Dorsolateral prefrontal cortex (tissue), 120 donors: ENCODE measurements at regions of chr20 and their contacts with region 1.

Region 1: GRCh38 chr20:18507218-18508021 is at the start of gene SEC23B:
- DNase-seq: peak; percentile 94 to 98 (median 98)
- H3K4me3 ChIP-seq: peak within 1 kb of the TSS; percentile 59 to 99 (median 88)
- H3K27ac ChIP-seq: peak within 1 kb of the TSS; percentile 91 to 100 (median 97)
- H3K27me3 ChIP-seq: peaks cover 0 to 23% (median 0%) of the 10 kb centered on the region in 45 donors
- CTCF ChIP-seq: peak in 12 of 56 donors; percentile 3 to 40 (median 17)
- total RNA-seq, gene SEC23B: 31.0 to 72.0 (median 46.7) TPM

Region 2: DNA sequence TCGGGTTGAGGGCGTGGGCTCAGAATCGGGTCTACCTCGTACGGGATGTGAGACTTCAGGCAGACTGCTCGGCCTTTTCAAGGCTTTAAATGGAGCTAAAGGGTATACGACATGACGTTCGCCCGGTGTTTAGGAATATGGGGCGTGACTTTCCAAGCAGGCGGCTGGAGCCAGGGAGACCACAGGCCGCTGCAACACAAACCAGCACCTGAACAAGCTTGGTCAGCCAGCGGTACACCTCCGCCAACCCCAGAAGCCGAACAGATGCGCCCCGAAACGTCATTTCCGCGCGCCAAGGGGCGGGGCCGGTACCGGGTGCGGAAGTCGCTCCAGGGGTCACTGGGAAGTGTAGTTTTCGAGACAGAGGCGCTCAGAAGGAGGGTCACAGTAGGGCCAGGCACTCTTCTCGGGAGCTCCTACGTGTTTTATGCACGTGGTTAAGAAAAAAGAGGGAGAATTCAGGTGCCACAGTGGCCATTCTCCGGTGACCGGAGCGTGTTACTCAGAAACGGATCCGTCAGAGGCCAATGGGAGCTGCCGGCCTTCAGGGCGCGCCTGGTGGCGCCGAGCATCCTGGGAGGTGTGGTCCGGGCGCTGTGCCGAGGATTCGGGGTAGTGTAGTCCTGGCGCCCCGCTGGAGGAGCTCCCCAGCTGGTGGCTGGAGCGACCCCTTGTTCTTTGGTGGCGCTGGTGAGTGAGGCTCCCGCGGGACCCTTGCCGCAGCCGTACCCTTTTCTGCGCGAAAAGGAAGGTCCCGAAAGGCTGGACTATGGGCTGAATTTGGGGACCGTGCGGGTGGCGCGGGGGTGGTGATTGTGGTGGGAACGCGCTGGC is 219.3 kb before region 1 on chr20 and contains the start of gene ZNF133:
- intact Hi-C with region 1: loop called in 1 of 2 experiments (anchors 10 kb)
- DNase-seq: peak; percentile 94 to 98 (median 96)
- H3K4me3 ChIP-seq: peak within 1 kb of the TSS; percentile 65 to 99 (median 90)
- H3K27ac ChIP-seq: peak within 1 kb of the TSS; percentile 88 to 100 (median 98)
- H3K27me3 ChIP-seq: peaks cover 0 to 5% (median 0%) of the 10 kb centered on the region in 45 donors
- CTCF ChIP-seq: peak in 44 of 56 donors; percentile 2 to 62 (median 38)
- total RNA-seq, gene ZNF133: 14.6 to 30.7 (median 23.0) TPM

Region 3: GRCh38 chr20:18363708-18364390 is 143.6 kb before region 1 on chr20:
- intact Hi-C with region 1: no loop called
- DNase-seq: no peak
- H3K4me3 ChIP-seq: no peak overlapping the region
- H3K27ac ChIP-seq: no peak overlapping the region
- H3K27me3 ChIP-seq: no peaks in the 10 kb centered on the region
- CTCF ChIP-seq: no peak

Region 4: GRCh38 chr20:18466894-18467730 is 40.3 kb before region 1 on chr20 and contains the starts of genes DZANK1 and POLR3F:
- intact Hi-C with region 1: loop called in 1 of 2 experiments (anchors 2 kb)
- DNase-seq: peak; percentile 96 to 99 (median 98)
- H3K4me3 ChIP-seq: peak within 1 kb of the TSS; percentile 72 to 100 (median 95)
- H3K27ac ChIP-seq: peak within 1 kb of the TSS; percentile 76 to 98 (median 93)
- H3K27me3 ChIP-seq: no peaks in the 10 kb centered on the region
- CTCF ChIP-seq: peak in 21 of 56 donors; percentile 3 to 49 (median 16)
- total RNA-seq, gene DZANK1: 5.0 to 14.4 (median 9.3) TPM
- total RNA-seq, gene POLR3F: 6.7 to 24.6 (median 16.5) TPM

Region 5: DNA sequence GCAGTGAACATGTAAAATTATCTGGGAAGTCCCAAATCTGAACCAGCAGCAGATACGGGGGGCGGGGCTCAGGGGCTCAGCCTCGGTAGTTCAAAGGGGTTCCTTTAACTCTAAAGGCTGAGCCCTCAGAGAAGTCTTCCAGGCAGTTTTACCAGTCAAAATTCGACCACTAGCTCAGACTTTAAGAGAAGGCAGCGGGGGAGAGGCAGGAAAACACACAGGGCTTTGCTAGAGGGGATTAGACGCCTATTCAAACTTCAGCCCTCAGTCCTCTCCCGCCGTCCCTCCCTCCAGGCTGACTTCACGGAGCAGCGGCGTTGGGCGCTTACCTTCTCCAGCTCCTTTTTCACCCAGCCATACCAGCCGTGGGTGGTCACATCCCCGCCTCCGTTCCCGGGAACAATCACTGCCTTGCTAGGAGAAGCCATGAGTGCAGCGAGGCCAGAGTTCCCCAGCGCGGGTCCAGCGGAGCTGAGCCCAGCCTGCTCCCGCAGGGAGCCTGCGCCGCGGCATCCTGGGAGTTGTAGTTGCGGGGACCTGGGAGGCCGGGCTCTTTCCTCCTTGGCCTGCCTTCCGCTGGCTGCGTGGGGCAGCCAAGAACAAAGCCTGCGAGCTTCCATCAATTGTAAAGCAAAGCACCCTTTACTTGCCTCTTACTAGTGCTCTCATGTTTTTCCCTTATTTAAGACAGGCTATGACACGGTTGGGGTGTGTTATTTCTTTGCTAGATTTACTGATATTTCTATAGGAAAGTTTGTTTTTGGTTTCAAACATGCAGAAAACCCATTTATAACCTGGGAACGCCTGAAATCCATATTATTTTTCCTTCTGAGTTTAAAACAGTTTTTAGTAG is 10.5 kb before region 1 on chr20 and contains the start of gene RBBP9:
- intact Hi-C with region 1: loop called in 1 of 2 experiments (anchors 1 kb)
- DNase-seq: peak; percentile 73 to 92 (median 87)
- H3K4me3 ChIP-seq: peak within 1 kb of the TSS; percentile 56 to 95 (median 81)
- H3K27ac ChIP-seq: peak within 1 kb of the TSS in 55 of 59 donors; percentile 2 to 90 (median 73)
- H3K27me3 ChIP-seq: no peaks in the 10 kb centered on the region
- CTCF ChIP-seq: peak in 13 of 56 donors; percentile 7 to 34 (median 17)
- total RNA-seq, gene RBBP9: 6.4 to 19.2 (median 10.8) TPM

Region 6: GRCh38 chr20:18566892-18567742 is 59.7 kb after region 1 on chr20 and contains the start of gene SMIM26:
- intact Hi-C with region 1: loop called (anchors 2 to 5 kb)
- DNase-seq: peak; percentile 82 to 93 (median 90)
- H3K4me3 ChIP-seq: peak within 1 kb of the TSS; percentile 56 to 98 (median 84)
- H3K27ac ChIP-seq: peak within 1 kb of the TSS in 58 of 59 donors; percentile 43 to 95 (median 85)
- H3K27me3 ChIP-seq: no peaks in the 10 kb centered on the region
- CTCF ChIP-seq: peak in 26 of 56 donors; percentile 12 to 57 (median 32)
- total RNA-seq, gene SMIM26: 26.9 to 78.9 (median 54.7) TPM

Region 7: DNA sequence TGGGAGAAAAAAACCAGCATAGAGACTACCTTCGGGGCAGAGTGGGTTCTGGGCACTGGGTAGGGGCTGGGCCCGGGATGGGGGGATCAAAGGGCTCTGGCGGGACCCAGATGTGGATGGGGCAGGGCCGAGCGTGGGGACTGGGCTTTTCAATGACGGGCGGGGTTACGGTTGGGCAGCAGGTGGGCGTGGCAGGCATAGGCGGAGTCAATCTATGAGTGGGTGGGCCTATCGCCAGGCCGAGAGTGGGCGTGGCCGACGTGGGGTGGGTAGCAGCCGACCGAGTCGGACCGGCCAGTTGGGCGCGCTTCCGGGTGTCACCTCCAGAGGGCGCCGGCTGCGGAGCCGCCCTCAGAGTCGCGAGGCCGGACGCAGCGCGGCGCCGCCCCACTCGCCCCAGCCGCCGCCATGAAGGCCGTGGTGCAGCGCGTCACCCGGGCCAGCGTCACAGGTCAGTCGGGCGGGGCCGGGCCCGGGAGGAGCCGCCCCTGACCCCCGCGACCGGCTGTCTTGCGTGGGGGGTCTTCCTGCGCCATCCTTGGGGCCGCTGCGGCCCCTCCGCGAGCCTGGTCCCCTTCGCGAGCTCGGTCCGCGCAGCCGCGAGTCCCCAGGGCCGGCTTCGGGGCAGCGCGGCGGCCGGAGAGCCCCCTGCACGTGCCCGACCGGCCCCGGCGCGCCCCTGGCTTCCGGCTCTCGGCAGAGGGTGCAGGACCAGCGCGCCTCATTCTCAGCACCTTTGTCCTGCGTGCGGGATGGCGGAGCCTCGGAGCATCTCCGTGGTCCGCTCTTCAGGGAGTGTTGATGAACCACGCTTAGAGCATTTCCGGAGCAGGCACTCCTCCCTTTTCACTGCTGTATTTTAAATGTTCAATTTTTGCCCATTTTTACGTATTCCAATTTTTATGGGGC is 80.5 kb after region 1 on chr20 and contains the start of gene DTD1:
- intact Hi-C with region 1: loop called in 1 of 2 experiments (anchors 5 kb)
- DNase-seq: peak; percentile 92 to 97 (median 94)
- H3K4me3 ChIP-seq: peak within 1 kb of the TSS; percentile 55 to 99 (median 87)
- H3K27ac ChIP-seq: peak within 1 kb of the TSS in 54 of 59 donors; percentile 42 to 93 (median 80)
- H3K27me3 ChIP-seq: no peaks in the 10 kb centered on the region
- CTCF ChIP-seq: peak; percentile 40 to 90 (median 75)
- total RNA-seq, gene DTD1: 17.6 to 55.0 (median 34.0) TPM

Region 8: GRCh38 chr20:18793625-18794427 is 286.4 kb after region 1 on chr20:
- intact Hi-C with region 1: loop called in 1 of 2 experiments (anchors 2 kb)
- DNase-seq: peak; percentile 87 to 96 (median 93)
- H3K4me3 ChIP-seq: peak overlapping the region; percentile 57 to 99 (median 81)
- H3K27ac ChIP-seq: peak overlapping the region; percentile 17 to 96 (median 88)
- H3K27me3 ChIP-seq: peaks cover 0 to 4% (median 0%) of the 10 kb centered on the region in 45 donors
- CTCF ChIP-seq: peak in 49 of 56 donors; percentile 7 to 66 (median 42)